Body of pancreas (tissue), 4 donors: ENCODE measurements at regions of chr6 and their contacts with region 1.

Region 1: DNA sequence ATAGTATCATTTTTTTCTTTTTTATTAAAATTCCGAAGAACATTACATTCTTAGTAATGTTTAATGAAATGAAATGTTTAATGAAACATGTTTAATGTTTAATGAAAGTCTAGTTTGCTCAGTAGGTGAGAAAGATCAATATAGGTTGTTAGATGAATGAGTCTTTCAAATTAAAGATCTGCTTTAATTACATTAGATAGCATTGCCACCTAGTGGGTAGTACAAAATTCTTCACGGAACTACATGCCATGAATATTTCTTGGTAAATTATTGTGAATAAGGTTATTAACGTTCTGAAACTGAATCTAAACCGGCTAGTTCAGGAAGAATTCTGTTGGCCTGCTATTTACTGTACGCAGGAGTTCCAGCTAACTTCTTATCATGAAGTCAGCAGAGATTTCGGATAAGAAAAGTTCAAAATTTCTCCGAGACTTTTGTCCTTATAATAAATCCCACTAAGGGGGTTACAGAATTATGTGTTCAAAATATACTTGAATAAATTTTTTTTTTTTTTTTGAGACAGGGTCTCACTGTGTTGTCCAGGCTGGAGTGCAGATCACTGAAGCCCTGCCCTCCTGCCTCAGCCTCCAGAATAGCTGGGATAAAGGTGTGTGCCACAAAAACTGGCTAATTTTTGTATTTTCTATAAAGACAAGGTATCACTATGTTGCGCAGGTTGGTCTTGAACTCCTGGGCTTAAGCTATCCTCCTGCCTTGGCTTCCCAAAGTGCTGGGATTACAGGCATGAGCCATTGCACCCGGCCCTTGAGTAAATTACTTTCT is 7.9 kb upstream of the GMNN start:
- DNase-seq: peak in 1 of 4 donors; percentile 30
- ATAC-seq: peak; percentile 89
- H3K4me3 ChIP-seq: no peak overlapping the region
- H3K27ac ChIP-seq: peak overlapping the region in 3 of 4 donors; percentile 56 to 77 (median 64)
- H3K4me1 ChIP-seq: peaks cover 43% of the 10 kb centered on the region
- H3K27me3 ChIP-seq: no peaks in the 10 kb centered on the region
- CTCF ChIP-seq: peak in 5 of 7 experiments; percentile 48 to 84 (median 80)
- POLR2A ChIP-seq: no peak

Region 2: GRCh38 chr6:24581084-24581669 is 185.7 kb before region 1 on chr6:
- intact Hi-C with region 1: loop called (anchors 5 kb)
- DNase-seq: peak; percentile 78 to 88 (median 79)
- ATAC-seq: peak; percentile 68
- H3K4me3 ChIP-seq: no peak overlapping the region
- H3K27ac ChIP-seq: no peak overlapping the region
- H3K4me1 ChIP-seq: peaks cover 30% of the 10 kb centered on the region
- H3K27me3 ChIP-seq: no peaks in the 10 kb centered on the region
- CTCF ChIP-seq: peak; percentile 63 to 88 (median 71)
- POLR2A ChIP-seq: no peak

Region 3: DNA sequence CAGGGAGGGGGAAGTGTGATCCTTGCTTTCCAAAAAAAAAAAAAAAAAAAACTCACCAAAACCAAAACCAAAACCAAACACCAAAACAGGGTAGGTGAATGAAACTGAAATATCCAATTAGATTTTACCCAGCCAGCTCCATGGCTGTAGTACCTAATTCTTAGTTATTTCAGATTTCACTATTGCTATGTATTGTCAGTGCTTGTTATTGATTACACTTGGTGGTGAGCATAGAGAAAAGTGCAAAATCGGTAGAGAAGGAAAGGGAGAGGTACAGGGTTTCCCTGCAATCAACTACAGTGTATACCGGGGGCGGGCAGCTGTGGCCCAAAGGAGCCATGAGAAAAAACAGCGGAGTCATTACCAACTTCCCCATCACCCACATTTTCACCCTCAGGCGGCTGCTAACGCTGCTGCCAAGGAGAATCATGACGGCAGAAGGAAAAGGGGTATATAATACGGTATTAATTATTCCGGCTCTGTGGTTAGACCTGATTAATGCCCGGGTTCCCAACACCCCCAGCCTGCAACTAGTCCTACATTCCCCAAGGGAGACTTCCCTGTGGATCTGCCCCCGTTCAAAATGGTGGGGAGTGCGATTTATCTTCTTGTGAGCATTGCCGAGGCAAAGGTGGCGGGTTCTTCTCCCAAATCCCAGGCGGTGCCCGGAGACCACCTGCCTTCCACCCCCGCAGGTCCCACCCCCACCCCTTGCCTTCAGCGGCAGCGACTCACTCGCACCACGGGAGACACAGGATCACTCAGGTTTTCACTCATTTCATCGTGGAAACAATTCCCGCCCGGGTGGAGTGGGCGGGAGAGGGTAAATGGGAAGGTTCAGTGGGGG is 47.5 kb before region 1 on chr6 and contains the start of gene C6orf62:
- intact Hi-C with region 1: loop called (anchors 10 kb)
- DNase-seq: peak; percentile 30 to 53 (median 42)
- ATAC-seq: no peak
- H3K4me3 ChIP-seq: peak within 1 kb of the TSS; percentile 84 to 86
- H3K27ac ChIP-seq: peak within 1 kb of the TSS; percentile 97 to 100 (median 98)
- H3K4me1 ChIP-seq: peaks cover 35% of the 10 kb centered on the region
- H3K27me3 ChIP-seq: no peaks in the 10 kb centered on the region
- CTCF ChIP-seq: no peak
- POLR2A ChIP-seq: peak in 2 of 3 donors; percentile 28 to 39
- total RNA-seq, gene C6orf62: 46.5 to 70.0 TPM

Region 4: DNA sequence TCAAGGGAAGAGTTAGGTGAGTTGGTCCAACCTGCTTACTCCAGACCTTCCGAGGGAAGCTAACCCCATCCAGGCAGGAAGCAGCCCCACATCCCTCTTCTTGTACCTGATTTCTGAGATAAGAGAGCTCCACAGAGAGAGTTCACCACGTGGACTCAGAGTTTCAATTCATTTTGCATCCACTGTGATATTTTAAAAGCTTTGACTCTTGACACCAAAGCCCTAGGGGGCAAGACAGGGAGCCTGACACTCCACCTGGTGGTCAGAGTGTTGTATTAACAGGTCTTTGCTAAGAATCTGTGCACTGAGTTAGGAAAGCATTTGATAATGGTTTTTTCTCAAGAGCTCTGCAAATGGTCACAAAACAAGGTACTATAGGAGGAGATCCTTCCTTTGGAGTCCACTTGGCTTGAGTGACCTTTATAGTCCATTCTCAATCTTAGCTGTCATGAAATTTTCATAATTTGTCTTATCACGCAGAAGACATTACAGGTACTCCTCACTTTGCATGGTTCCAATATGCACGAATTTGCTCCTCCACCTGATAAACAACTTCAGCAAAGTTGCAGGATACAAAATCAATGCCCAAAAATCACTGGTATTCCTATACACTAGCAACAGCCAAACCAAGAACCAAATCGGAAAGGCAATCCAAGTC is 225.1 kb after region 1 on chr6:
- intact Hi-C with region 1: no loop called
- DNase-seq: peak; percentile 53 to 64 (median 56)
- ATAC-seq: peak; percentile 81
- H3K4me3 ChIP-seq: no peak overlapping the region
- H3K27ac ChIP-seq: no peak overlapping the region
- H3K4me1 ChIP-seq: no peaks in the 10 kb centered on the region
- H3K27me3 ChIP-seq: no peaks in the 10 kb centered on the region
- CTCF ChIP-seq: peak; percentile 55 to 77 (median 72)
- POLR2A ChIP-seq: no peak